HEK293 (cell line): ENCODE measurements at regions of chr18 and their contacts with region 1.

Region 1: DNA sequence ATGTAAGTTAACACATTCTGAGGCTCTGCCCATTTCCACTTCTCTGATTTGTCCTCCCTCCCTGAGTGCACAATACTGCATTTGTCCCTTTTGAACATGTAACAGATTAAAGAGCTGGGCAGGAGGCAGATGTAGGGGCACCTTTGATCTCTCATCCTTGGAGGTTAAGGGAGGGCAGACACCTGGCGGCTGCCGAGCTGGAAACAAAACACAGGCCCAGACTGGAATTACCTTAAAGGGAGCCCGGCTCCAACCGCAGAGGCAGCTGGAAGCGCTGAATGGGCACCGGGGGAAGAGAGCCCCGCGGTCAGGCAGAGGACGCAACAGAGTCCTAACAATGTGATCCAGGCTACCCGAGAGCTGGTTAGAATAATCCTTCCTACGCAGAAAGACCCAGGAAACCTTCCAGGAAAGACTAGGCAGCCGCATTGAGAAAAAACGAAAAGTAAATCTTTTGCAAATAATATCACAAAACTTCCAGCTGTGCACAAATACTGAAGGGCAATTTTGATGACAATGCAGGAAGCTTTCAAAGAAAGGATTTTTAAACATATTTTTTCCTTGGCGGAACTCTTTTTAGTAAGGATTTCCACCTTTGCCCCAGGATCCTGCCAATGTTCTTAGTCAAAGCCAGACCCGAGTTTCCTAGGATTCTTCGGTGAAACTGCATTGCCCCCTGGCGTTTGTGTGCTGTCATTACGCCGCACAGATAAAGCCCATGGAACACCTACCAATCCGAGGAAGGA is 216.0 kb downstream of the TGIF1 start:
- H3K4me3 ChIP-seq: no peak overlapping the region
- H3K27ac ChIP-seq: peak overlapping the region; percentile 54
- H3K4me1 ChIP-seq: no peaks in the 10 kb centered on the region
- CTCF ChIP-seq: peak; percentile 70

Region 2: DNA sequence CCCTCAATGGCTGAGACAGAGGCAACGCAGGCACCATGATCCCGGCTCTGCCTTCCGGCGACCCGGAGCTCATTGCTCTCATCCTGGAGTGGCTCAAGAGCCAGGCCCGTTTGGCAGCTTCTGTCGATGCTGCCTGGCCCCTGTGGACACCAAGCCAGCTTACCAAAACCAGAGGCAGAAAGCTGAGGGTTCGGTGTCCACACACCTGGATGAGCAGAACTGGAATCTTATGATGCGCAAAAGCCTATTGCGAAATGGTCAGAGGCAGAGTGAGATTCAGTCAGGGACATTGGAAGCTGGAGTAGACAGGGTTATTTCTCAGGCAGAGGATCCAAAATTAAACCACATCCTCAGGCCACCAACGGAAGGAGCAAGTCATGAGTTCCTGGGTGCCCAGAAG is 250.8 kb before region 1 on chr18:
- CTCF ChIA-PET with region 1: no interaction called
- POLR2A ChIA-PET with region 1: no interaction called
- H3K4me3 ChIP-seq: no peak overlapping the region
- H3K27ac ChIP-seq: no peak overlapping the region
- H3K4me1 ChIP-seq: peaks cover under 1% of the 10 kb centered on the region
- CTCF ChIP-seq: no peak

Region 3: GRCh38 chr18:3466045-3466444 is 199.9 kb before region 1 on chr18:
- CTCF ChIA-PET with region 1: interaction called, 10 read pairs
- POLR2A ChIA-PET with region 1: interaction called, 3 read pairs
- H3K4me3 ChIP-seq: no peak overlapping the region
- H3K27ac ChIP-seq: no peak overlapping the region
- H3K4me1 ChIP-seq: no peaks in the 10 kb centered on the region
- CTCF ChIP-seq: no peak

Region 4: GRCh38 chr18:3604498-3605408 is 61.2 kb before region 1 on chr18:
- CTCF ChIA-PET with region 1: interaction called, 16 read pairs
- POLR2A ChIA-PET with region 1: interaction called, 7 read pairs
- H3K4me3 ChIP-seq: peak overlapping the region; percentile 21
- H3K27ac ChIP-seq: peak overlapping the region; percentile 86
- H3K4me1 ChIP-seq: peaks cover 16% of the 10 kb centered on the region
- CTCF ChIP-seq: no peak

Region 5: GRCh38 chr18:3679241-3679640 is 13.3 kb after region 1 on chr18:
- CTCF ChIA-PET with region 1: interaction called, 19 read pairs
- POLR2A ChIA-PET with region 1: no interaction called
- H3K4me3 ChIP-seq: no peak overlapping the region
- H3K27ac ChIP-seq: no peak overlapping the region
- H3K4me1 ChIP-seq: no peaks in the 10 kb centered on the region
- CTCF ChIP-seq: no peak

Region 6: GRCh38 chr18:3717376-3718025 is 51.5 kb after region 1 on chr18:
- CTCF ChIA-PET with region 1: no interaction called
- POLR2A ChIA-PET with region 1: no interaction called
- H3K4me3 ChIP-seq: no peak overlapping the region
- H3K27ac ChIP-seq: no peak overlapping the region
- H3K4me1 ChIP-seq: peaks cover 5% of the 10 kb centered on the region
- CTCF ChIP-seq: no peak

Region 7: GRCh38 chr18:3869848-3870247 is 203.9 kb after region 1 on chr18:
- CTCF ChIA-PET with region 1: interaction called, 38 read pairs
- POLR2A ChIA-PET with region 1: no interaction called
- H3K4me3 ChIP-seq: no peak overlapping the region
- H3K27ac ChIP-seq: no peak overlapping the region
- H3K4me1 ChIP-seq: peaks cover 6% of the 10 kb centered on the region
- CTCF ChIP-seq: 0 out of 2 replicates have a peak, but pooled peaks have one; percentile 19